ENCODE measurements at regions of chr10 and their contacts with region 1.

Region 1: DNA sequence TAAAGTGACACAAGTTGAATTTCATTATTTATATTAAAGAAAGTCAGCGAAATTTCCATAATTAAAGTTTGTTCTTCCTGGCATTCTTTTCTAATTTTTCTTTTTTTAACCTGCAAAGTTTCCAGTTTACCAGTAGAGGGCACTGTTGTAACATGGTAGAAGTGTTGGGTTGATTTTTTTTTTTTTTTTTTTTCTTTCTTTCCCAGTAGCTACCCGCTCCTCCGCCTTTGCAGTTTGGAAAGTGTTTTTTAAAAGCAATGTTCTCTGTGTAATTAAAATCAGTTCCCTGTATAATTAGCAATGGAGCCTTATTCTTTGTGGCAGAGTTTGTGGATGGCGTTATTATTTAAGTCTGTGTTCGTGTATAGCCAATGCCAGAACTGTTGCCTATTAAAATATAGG is 53.7 kb downstream of the TAF3 start:
- DNase-seq: peak; percentile 68
- H3K4me3 ChIP-seq: peak overlapping the region; percentile 26 to 78 (median 32)
- H3K27ac ChIP-seq: no peak overlapping the region
- H3K4me1 ChIP-seq: peaks cover 13% of the 10 kb centered on the region
- H3K27me3 ChIP-seq: no peaks in the 10 kb centered on the region
- CTCF ChIP-seq: peak; percentile 43 to 46
- POLR2A ChIP-seq: no peak

Region 2: GRCh38 chr10:7525314-7526016 is 346.6 kb before region 1 on chr10:
- CTCF ChIA-PET with region 1: interaction called, 10 read pairs
- POLR2A ChIA-PET with region 1: no interaction called
- dilution Hi-C with region 1: no loop called
- intact Hi-C with region 1: loop called (anchors 5 kb)
- DNase-seq: peak; percentile 62
- H3K4me3 ChIP-seq: no peak overlapping the region
- H3K27ac ChIP-seq: no peak overlapping the region
- H3K4me1 ChIP-seq: no peaks in the 10 kb centered on the region
- H3K27me3 ChIP-seq: no peaks in the 10 kb centered on the region
- CTCF ChIP-seq: peak; percentile 54 to 59
- POLR2A ChIP-seq: no peak

Region 3: GRCh38 chr10:7896297-7896696 is 24.3 kb after region 1 on chr10:
- CTCF ChIA-PET with region 1: no interaction called
- POLR2A ChIA-PET with region 1: no interaction called
- dilution Hi-C with region 1: no loop called
- intact Hi-C with region 1: no loop called
- DNase-seq: no peak
- H3K4me3 ChIP-seq: no peak overlapping the region
- H3K27ac ChIP-seq: no peak overlapping the region
- H3K4me1 ChIP-seq: peaks cover 9% of the 10 kb centered on the region
- H3K27me3 ChIP-seq: no peaks in the 10 kb centered on the region
- CTCF ChIP-seq: no peak
- POLR2A ChIP-seq: no peak

Region 4: GRCh38 chr10:8473205-8473604 is 601.2 kb after region 1 on chr10:
- CTCF ChIA-PET with region 1: interaction called, 7 read pairs
- POLR2A ChIA-PET with region 1: no interaction called
- dilution Hi-C with region 1: no loop called
- intact Hi-C with region 1: loop called (anchors 1 kb)
- DNase-seq: peak; percentile 49
- H3K4me3 ChIP-seq: no peak overlapping the region
- H3K27ac ChIP-seq: no peak overlapping the region
- H3K4me1 ChIP-seq: no peaks in the 10 kb centered on the region
- H3K27me3 ChIP-seq: peaks cover 7 to 12% of the 10 kb centered on the region in 2 experiments
- CTCF ChIP-seq: peak in 1 of 2 donors; percentile 14
- POLR2A ChIP-seq: no peak

Region 5: DNA sequence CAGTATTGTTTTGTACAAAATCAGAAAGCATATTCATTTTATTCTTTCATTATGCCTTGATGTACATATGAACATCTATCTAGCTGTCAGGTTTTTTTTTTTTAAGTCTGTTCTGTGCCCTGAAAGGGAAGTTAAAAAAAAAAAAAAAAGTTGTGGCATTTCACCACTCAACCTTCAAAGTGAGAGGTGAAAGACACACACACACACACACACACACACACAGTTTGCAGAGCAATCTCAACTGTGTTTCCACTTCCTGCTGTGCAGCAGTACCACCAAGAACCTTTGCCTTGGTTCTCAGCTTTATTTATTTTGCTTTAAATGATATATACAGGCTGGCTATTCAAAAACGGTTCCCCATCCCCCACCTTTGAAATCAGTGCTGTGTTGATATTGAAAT is 1138.1 kb after region 1 on chr10:
- CTCF ChIA-PET with region 1: no interaction called
- POLR2A ChIA-PET with region 1: no interaction called
- dilution Hi-C with region 1: no loop called
- intact Hi-C with region 1: loop called (anchors 10 kb)
- DNase-seq: no peak
- H3K4me3 ChIP-seq: no peak overlapping the region
- H3K27ac ChIP-seq: no peak overlapping the region
- H3K4me1 ChIP-seq: peaks cover 10% of the 10 kb centered on the region
- H3K27me3 ChIP-seq: no peaks in the 10 kb centered on the region
- CTCF ChIP-seq: no peak
- POLR2A ChIP-seq: no peak

Region 6: GRCh38 chr10:9302120-9302746 is 1430.2 kb after region 1 on chr10:
- CTCF ChIA-PET with region 1: interaction called, 24 read pairs
- POLR2A ChIA-PET with region 1: no interaction called
- dilution Hi-C with region 1: no loop called
- intact Hi-C with region 1: loop called (anchors 1 kb)
- DNase-seq: peak; percentile 79
- H3K4me3 ChIP-seq: no peak overlapping the region
- H3K27ac ChIP-seq: no peak overlapping the region
- H3K4me1 ChIP-seq: no peaks in the 10 kb centered on the region
- H3K27me3 ChIP-seq: peaks cover 0 to 2% of the 10 kb centered on the region in 2 experiments
- CTCF ChIP-seq: peak in 1 of 2 donors; percentile 8
- POLR2A ChIP-seq: no peak